Thyroid gland (tissue), 4 donors: ENCODE measurements at regions of chr14 and their contacts with region 1.

Region 1: DNA sequence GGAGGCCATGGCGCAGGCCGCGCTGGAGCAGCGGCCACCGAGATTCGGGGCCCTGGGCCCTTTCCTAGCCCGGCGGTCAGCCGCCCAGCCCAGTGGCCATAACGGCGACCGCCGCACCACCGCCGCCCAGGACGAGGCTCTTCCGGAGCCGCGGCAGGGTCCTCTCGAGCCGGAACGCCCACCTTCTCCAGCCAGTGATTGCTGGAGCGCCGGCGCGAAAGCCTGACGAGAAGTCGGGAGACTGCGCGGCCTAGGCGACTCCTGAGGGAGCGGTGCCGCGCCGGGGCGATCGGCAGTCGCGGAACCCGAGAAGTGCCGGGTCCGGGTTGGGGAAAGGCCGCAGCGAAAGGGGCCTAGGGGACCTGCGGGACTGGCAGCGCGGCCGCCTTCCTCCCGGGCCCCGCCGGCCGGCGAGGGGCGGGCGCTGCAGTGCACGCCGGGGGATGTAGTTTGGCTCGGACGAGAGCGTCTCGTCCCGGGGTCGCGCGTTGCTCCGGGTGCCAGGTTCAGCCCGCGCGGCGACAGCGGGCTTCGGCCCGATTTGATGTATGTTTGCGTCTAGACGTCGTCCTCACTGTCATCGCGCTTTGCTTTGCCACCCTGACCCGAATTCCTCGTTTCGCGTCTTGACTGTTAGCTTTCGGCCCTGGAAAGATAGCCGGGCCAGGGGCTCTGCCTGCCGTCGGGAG is at the start of gene VTI1B:
- DNase-seq: peak; percentile 76 to 81
- H3K4me3 ChIP-seq: peak within 1 kb of the TSS; percentile 56 to 96 (median 61)
- H3K27ac ChIP-seq: peak within 1 kb of the TSS; percentile 99 to 100 (median 99)
- H3K4me1 ChIP-seq: peaks cover 20 to 28% of the 10 kb centered on the region in 2 donors
- H3K27me3 ChIP-seq: no peaks in the 10 kb centered on the region
- CTCF ChIP-seq: no peak
- POLR2A ChIP-seq: peak; percentile 3 to 69
- total RNA-seq, gene VTI1B: 82.0 to 178 (median 99.8) TPM

Region 2: DNA sequence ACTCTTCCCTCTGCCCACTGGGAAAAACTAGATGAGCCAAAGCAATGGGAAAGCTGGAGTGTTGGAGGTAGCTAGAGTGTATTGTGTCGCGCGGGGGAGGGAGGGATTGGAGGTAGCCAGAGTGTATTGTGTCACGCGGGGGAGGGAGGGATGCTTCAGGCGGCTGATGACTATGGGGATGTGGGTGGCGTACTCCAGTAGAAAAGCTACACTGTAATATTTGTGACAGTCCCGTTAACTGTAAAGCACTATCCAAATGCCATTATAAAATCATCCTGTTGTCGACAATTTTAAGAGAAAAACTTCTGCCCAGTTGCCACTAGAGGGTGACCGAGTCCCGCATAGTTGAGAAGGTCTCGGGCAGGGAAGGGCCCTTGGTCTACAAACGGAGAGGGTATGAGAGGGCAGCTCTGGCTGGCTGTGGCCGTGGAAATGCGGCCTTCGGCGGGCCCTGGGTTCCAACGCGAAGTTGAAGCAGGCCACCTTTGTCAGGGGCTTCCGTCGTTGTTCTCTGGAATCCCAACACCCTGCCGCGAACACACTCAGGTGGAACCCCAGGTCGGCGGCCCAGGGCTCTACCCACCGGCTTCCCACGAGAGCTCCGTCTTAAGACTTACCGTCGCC is 247.5 kb before region 1 on chr14:
- intact Hi-C with region 1: loop called (anchors 10 kb)
- DNase-seq: peak; percentile 81 to 89
- H3K4me3 ChIP-seq: no peak overlapping the region
- H3K27ac ChIP-seq: peak overlapping the region in 1 of 3 donors; percentile 62
- H3K4me1 ChIP-seq: peaks cover 4 to 15% of the 10 kb centered on the region in 2 donors
- H3K27me3 ChIP-seq: no peaks in the 10 kb centered on the region
- CTCF ChIP-seq: peak; percentile 66 to 92 (median 86)
- POLR2A ChIP-seq: no peak

Region 3: DNA sequence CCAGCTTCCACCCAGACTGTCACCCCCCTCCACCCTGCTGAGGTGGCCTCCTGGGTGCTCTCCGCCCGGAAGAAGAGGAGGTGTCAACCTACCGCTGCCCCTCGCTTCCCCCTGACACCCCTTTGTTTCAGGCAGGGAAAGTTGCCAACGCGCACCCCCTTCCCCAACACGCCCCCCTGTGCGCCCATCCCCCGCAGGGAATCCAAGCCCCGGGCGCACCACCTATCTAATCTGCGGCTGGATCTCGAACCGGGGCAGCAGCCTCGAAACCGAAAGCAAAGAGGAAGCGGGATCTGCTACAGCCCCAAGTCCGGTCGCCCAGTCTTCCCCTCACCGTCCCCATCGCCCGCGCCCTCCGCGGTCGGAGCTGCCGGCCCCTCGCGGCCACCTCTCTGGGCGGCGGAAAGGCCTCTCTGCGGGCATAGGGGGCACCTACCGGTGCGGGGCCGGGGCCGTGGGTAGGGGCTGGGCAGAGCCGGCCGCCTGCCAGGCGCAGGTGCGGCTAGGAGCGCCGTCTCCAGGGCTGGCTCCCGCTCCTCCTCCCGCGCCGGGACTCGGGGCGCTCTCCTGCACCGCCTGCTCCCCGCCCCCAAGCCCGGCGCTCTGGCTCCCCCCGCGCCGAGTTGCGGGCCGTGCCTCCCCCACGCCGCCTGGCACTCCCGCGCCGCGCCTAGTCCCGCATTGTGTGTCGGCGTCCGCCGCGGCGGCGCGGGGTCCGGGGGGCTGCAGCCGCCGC is 159.8 kb before region 1 on chr14:
- intact Hi-C with region 1: loop called (anchors 10 kb)
- DNase-seq: peak; percentile 41 to 54
- H3K4me3 ChIP-seq: peak overlapping the region; percentile 34 to 94 (median 84)
- H3K27ac ChIP-seq: peak overlapping the region; percentile 26 to 68 (median 54)
- H3K4me1 ChIP-seq: peaks cover 3 to 22% of the 10 kb centered on the region in 2 donors
- H3K27me3 ChIP-seq: no peaks in the 10 kb centered on the region
- CTCF ChIP-seq: no peak
- POLR2A ChIP-seq: no peak

Region 4: GRCh38 chr14:67583711-67584644 is 90.6 kb before region 1 on chr14:
- intact Hi-C with region 1: loop called (anchors 5 kb)
- DNase-seq: peak; percentile 37 to 45
- H3K4me3 ChIP-seq: no peak overlapping the region
- H3K27ac ChIP-seq: no peak overlapping the region
- H3K4me1 ChIP-seq: peaks cover 0 to 9% of the 10 kb centered on the region in 2 donors
- H3K27me3 ChIP-seq: no peaks in the 10 kb centered on the region
- CTCF ChIP-seq: peak in 4 of 6 experiments; percentile 39 to 65 (median 61)
- POLR2A ChIP-seq: peak in 1 of 2 donors; percentile 5

Region 5: DNA sequence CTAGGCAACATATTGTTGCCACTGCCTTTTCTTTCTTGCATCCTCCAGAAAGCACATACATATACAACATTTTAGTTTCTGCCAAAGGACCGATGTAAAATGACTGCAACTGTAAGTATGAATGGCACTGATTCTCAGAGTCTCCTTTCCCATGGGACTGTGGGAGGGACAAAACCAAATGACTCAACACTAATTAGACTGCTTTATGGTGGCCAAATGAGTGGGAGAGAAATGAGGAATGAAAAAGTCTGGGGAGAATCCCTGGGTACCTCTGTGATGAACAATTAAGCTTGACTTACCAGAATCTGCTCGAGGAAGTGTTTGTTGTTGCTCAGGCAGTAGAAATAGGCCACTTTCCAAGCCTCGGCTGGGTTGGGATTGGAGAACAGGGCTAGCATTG is 131.6 kb after region 1 on chr14:
- intact Hi-C with region 1: no loop called
- DNase-seq: no peak
- H3K4me3 ChIP-seq: no peak overlapping the region
- H3K27ac ChIP-seq: no peak overlapping the region
- H3K4me1 ChIP-seq: no peaks in the 10 kb centered on the region
- H3K27me3 ChIP-seq: no peaks in the 10 kb centered on the region
- CTCF ChIP-seq: no peak
- POLR2A ChIP-seq: no peak